ENCODE measurements at regions of chr5 and their contacts with region 1.

Region 1: DNA sequence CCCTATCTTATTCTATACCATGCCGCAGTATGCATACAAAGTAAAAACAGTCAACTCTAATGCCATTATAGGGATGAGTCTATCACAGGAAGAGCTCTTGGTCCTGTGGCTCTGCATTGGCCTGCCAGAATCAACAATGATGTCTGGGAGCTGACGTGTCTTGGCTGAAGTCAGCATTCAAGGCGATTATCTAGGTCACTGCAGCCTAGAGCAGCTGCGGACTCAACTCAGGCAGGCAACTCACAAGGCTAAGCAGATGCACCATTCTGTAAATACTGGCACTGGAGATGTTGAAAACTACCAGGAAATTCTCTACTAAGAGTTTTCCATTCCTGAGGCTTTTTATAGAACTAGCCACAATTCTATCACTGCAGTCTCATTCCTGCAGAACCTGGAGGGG is 13.3 kb downstream of the SPATA9 start:
- DNase-seq: peak; percentile 76 to 88
- ATAC-seq: peak; percentile 99 to 100 (median 99)
- H3K4me3 ChIP-seq: no peak overlapping the region
- H3K27ac ChIP-seq: peak overlapping the region; percentile 88
- H3K4me1 ChIP-seq: peaks cover 17% of the 10 kb centered on the region
- H3K27me3 ChIP-seq: no peaks in the 10 kb centered on the region
- CTCF ChIP-seq: no peak

Region 2: DNA sequence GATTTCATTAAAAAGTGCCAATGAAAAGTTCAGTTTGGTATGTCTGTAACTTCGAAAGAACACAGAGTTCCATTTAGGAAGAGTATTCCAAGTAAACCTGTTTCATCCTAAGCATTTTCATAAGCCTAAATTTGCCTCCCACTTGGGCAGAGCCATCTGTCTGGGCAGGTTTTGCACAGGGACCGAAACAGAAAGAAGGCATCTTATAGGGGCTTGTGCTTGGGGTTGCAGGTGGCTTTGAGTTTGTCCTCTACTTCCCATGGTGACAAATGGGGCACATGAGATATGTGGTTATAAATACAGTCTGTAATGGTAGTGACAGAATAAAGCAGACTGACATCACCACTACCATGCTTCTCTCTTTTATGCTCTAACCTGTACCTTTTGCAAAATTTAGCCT is 448.3 kb before region 1 on chr5:
- intact Hi-C with region 1: no loop called
- DNase-seq: no peak
- ATAC-seq: no peak
- H3K4me3 ChIP-seq: no peak overlapping the region
- H3K27ac ChIP-seq: no peak overlapping the region
- H3K4me1 ChIP-seq: no peaks in the 10 kb centered on the region
- H3K27me3 ChIP-seq: no peaks in the 10 kb centered on the region
- CTCF ChIP-seq: no peak

Region 3: GRCh38 chr5:95718203-95718602 is 48.7 kb after region 1 on chr5:
- intact Hi-C with region 1: loop called in 1 of 2 experiments (anchors 5 kb)
- DNase-seq: no peak
- ATAC-seq: no peak
- H3K4me3 ChIP-seq: no peak overlapping the region
- H3K27ac ChIP-seq: no peak overlapping the region
- H3K4me1 ChIP-seq: peaks cover 6% of the 10 kb centered on the region
- H3K27me3 ChIP-seq: no peaks in the 10 kb centered on the region
- CTCF ChIP-seq: no peak

Region 4: DNA sequence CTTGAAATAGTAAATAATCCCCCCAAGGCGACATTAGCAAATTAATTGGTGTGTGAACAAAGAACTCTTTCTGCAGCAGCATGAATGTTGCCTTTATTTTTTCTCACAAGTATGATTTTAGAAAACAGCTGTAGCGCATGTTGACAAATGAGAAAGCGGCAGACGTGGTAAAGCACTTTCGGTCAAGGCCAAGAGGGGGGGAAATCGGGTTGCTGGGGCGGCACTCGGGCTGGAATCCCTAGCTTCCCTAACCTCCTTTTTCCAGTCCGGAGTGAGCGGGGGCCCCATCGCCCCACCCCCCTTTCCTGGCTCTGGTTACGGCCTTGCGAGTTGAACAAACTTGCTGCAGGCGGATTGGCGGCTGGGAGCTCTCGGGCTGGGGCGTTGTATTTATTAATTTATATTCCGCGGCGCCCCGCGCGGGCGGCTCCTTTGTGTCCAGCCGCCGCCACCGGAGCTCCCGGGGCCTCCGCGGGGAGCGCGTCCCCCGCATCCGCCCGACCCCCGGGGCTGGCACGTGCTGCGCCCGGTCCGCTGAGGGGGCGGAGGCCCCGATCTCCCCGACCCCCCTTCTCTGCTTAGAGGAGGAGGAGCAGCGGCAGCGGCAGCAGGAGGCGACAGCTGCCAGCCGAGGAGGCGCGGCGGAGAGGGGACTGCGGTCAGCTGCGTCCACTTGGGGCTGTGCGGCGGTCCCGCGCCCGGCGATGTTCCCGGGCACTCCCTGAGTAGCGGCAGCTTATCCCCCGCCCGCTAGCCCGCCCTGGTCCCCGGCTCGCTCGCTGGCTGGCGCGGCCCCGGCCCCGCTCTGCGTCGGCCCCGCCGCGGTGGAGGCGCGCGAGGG is 61.4 kb after region 1 on chr5 and contains the start of gene RHOBTB3:
- intact Hi-C with region 1: loop called (anchors 2 to 5 kb)
- DNase-seq: peak; percentile 91 to 95
- ATAC-seq: peak; percentile 81 to 84 (median 82)
- H3K4me3 ChIP-seq: peak within 1 kb of the TSS; percentile 90
- H3K27ac ChIP-seq: peak within 1 kb of the TSS; percentile 94
- H3K4me1 ChIP-seq: peaks cover 57% of the 10 kb centered on the region
- H3K27me3 ChIP-seq: no peaks in the 10 kb centered on the region
- CTCF ChIP-seq: no peak
- total RNA-seq, gene RHOBTB3: 44.0 to 86.0 (median 62.8) TPM

Region 5: GRCh38 chr5:95781101-95781583 is 111.6 kb after region 1 on chr5:
- intact Hi-C with region 1: loop called in 1 of 2 experiments (anchors 5 kb)
- DNase-seq: peak; percentile 80 to 88
- ATAC-seq: peak; percentile 79 to 88 (median 82)
- H3K4me3 ChIP-seq: no peak overlapping the region
- H3K27ac ChIP-seq: peak overlapping the region; percentile 73
- H3K4me1 ChIP-seq: peaks cover 49% of the 10 kb centered on the region
- H3K27me3 ChIP-seq: no peaks in the 10 kb centered on the region
- CTCF ChIP-seq: peak; percentile 88

Region 6: GRCh38 chr5:95835682-95836385 is 166.3 kb after region 1 on chr5:
- intact Hi-C with region 1: no loop called
- DNase-seq: peak in 1 of 2 donors; percentile 70
- ATAC-seq: peak; percentile 5 to 27 (median 12)
- H3K4me3 ChIP-seq: peak overlapping the region; percentile 83
- H3K27ac ChIP-seq: peak overlapping the region; percentile 97
- H3K4me1 ChIP-seq: peaks cover 40% of the 10 kb centered on the region
- H3K27me3 ChIP-seq: no peaks in the 10 kb centered on the region
- CTCF ChIP-seq: no peak

Region 7: GRCh38 chr5:95846554-95847260 is 177.2 kb after region 1 on chr5:
- intact Hi-C with region 1: loop called in 1 of 2 experiments (anchors 5 kb)
- DNase-seq: peak; percentile 64 to 71
- ATAC-seq: peak; percentile 52 to 74 (median 66)
- H3K4me3 ChIP-seq: no peak overlapping the region
- H3K27ac ChIP-seq: peak overlapping the region; percentile 4
- H3K4me1 ChIP-seq: peaks cover 15% of the 10 kb centered on the region
- H3K27me3 ChIP-seq: no peaks in the 10 kb centered on the region
- CTCF ChIP-seq: peak; percentile 98